ENCODE measurements at regions of chr7 and their contacts with region 1.

Region 1: DNA sequence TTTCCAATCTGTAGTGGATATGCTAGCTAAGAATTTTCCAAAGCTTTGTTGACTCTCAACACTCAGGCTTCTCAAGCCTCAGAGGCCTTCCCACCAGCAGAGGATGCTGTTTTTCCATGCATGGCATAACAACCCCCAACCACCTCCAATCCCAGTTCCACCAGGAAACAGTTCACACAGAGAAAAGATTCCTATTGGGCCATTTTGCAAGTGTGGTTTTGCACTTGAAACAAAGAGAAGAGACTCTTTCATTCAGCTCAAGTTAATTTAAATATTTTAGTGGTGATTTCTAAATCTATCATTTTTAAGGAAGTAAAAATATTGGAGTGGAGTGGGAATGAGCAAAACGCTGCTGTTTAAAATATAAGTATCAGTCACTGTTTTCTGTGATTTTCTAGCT is 105.6 kb upstream of the COL1A2 start:
- DNase-seq: peak; percentile 93
- H3K4me3 ChIP-seq: no peak overlapping the region
- H3K27ac ChIP-seq: no peak overlapping the region
- H3K4me1 ChIP-seq: peaks cover 11% of the 10 kb centered on the region
- H3K27me3 ChIP-seq: no peaks in the 10 kb centered on the region
- CTCF ChIP-seq: peak; percentile 97

Region 2: GRCh38 chr7:94436018-94436604 is 147.0 kb after region 1 on chr7:
- CTCF ChIA-PET with region 1: interaction called, 11 read pairs
- POLR2A ChIA-PET with region 1: no interaction called
- intact Hi-C with region 1: loop called (anchors 1 kb)
- DNase-seq: peak; percentile 87
- H3K4me3 ChIP-seq: no peak overlapping the region
- H3K27ac ChIP-seq: no peak overlapping the region
- H3K4me1 ChIP-seq: no peaks in the 10 kb centered on the region
- H3K27me3 ChIP-seq: no peaks in the 10 kb centered on the region
- CTCF ChIP-seq: peak; percentile 89

Region 3: DNA sequence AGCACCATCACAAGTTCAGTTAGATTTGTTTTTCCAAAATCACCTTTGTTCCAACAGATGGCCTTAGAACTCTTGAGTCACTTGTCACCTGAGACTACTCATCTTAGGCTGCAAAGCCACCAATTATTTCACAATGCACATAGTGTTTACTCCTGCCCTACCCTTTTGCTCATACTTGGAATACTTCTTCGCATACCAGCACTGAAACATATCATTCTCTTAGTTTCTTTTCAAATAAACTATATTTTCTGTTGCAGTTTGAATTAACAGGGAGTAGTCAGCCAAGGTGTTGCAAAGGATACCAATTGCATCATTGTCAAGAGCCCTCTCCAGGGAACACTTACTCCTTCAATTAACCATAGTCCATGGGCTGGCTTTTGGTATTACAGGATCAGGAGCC is 291.5 kb after region 1 on chr7:
- CTCF ChIA-PET with region 1: interaction called, 11 read pairs
- POLR2A ChIA-PET with region 1: no interaction called
- intact Hi-C with region 1: no loop called
- DNase-seq: no peak
- H3K4me3 ChIP-seq: no peak overlapping the region
- H3K27ac ChIP-seq: no peak overlapping the region
- H3K4me1 ChIP-seq: no peaks in the 10 kb centered on the region
- H3K27me3 ChIP-seq: no peaks in the 10 kb centered on the region
- CTCF ChIP-seq: no peak

Region 4: DNA sequence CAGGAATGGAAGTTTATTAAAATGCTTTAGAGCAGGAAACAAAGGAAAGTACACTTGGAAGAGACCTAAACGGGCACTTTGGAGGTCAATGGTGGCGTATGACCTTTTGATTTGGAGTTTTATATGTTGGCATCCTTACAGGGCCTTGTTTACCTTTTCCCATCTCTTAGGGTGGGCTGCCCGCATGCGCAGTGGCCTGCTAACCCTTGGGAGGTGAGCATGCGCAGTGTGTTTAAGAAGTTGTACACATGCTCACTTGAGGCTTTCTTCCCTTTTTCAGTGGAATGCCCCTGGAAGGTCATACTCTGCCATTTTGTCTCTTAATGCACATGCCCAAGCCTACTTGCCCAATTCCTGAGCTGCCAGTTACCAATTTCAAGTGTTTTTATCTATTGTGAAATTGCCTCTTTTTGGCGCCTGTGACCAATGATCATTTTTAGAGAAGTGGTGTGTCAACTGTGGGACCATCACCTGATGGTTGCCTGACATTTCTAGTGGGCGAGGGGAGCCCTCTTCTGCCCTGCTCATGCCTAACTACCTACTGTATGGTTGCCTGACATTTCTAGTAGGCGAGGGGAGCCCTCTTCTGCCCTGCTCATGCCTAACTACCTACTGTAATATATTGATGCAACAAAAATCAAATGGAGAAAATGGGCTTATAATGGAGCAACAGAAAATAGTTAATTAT is 756.3 kb after region 1 on chr7:
- CTCF ChIA-PET with region 1: no interaction called
- POLR2A ChIA-PET with region 1: no interaction called
- intact Hi-C with region 1: loop called (anchors 5 kb)
- DNase-seq: peak; percentile 72
- H3K4me3 ChIP-seq: no peak overlapping the region
- H3K27ac ChIP-seq: no peak overlapping the region
- H3K4me1 ChIP-seq: peaks cover 18% of the 10 kb centered on the region
- H3K27me3 ChIP-seq: no peaks in the 10 kb centered on the region
- CTCF ChIP-seq: peak; percentile 65

Region 5: GRCh38 chr7:95246831-95247370 is 957.8 kb after region 1 on chr7:
- CTCF ChIA-PET with region 1: interaction called, 4 read pairs
- POLR2A ChIA-PET with region 1: no interaction called
- intact Hi-C with region 1: loop called (anchors 2 kb)
- DNase-seq: peak; percentile 87
- H3K4me3 ChIP-seq: no peak overlapping the region
- H3K27ac ChIP-seq: no peak overlapping the region
- H3K4me1 ChIP-seq: peaks cover 5% of the 10 kb centered on the region
- H3K27me3 ChIP-seq: no peaks in the 10 kb centered on the region
- CTCF ChIP-seq: peak; percentile 89